K562 (cell line): ENCODE measurements at regions of chr1 and their contacts with region 1.

Region 1: GRCh38 chr1:36475910-36476604 is 6.7 kb downstream of the CSF3R start:
- DNase-seq: no peak
- ATAC-seq: no peak
- H3K4me3 ChIP-seq: no peak overlapping the region
- H3K27ac ChIP-seq: no peak overlapping the region
- H3K4me1 ChIP-seq: peaks cover 12 to 25% of the 10 kb centered on the region in 2 experiments
- H3K27me3 ChIP-seq: no peaks in the 10 kb centered on the region
- CTCF ChIP-seq: peak in 1 of 3 experiments; percentile 31; a peak in 2 of 6 replicates
- EP300 ChIP-seq: no peak
- POLR2A ChIP-seq: no peak
- RAD21 ChIP-seq: no peak

Region 2: DNA sequence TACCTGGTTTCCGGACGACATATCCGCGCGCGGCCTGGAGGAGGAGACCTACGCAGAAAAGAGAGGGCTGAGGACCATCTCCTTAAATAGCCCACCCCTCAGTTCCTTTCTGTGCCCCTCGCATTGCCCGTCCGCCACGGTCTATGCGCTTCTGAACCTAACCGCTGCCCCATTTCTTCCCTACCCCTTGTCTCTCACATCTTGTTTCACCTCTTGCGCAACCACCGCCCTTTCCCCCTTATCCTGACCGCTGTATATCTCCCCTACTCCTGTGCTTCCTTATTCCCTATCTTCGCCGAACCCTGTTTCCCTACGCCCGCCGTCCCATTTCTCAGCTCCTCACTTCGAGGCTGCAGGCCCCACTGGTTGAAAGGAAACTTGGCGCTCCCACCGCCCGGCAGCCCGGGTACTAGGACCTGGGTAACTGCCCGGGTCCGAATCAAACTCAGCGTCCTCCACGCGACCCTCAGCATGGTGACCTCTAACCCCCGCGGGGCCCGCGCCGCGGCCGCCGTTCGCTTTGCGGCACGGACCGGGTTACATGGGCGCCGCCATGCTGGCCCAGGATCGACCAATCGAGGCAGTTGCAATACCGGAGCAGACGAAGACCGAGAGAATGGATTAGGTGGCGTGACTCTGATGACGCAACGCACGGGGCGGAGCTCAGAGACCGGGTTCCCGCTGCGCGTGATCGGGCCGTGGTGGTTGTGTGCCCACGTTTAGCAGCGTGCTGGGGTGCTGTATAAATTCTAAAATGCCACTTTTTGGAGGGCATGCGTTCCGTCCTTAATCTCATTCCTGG is 12.1 kb before region 1 on chr1 and contains the start of gene MRPS15:
- CTCF ChIA-PET with region 1: no interaction called
- POLR2A ChIA-PET with region 1: interaction called, 10 read pairs
- in situ Hi-C with region 1: no loop called
- intact Hi-C with region 1: no loop called
- DNase-seq: peak; percentile 96 to 99 (median 97)
- ATAC-seq: peak; percentile 91
- H3K4me3 ChIP-seq: peak within 1 kb of the TSS; percentile 93
- H3K27ac ChIP-seq: peak within 1 kb of the TSS; percentile 97
- H3K4me1 ChIP-seq: peaks cover 16 to 24% of the 10 kb centered on the region in 2 experiments
- H3K27me3 ChIP-seq: no peaks in the 10 kb centered on the region
- CTCF ChIP-seq: no peak
- EP300 ChIP-seq: peak; percentile 81
- POLR2A ChIP-seq: peak; percentile 96
- RAD21 ChIP-seq: peak in 1 of 2 experiments; percentile 14; a peak in 2 of 4 replicates
- polyA plus RNA-seq, gene MRPS15: 62.9 to 107 TPM

Region 3: GRCh38 chr1:36565576-36566501 is 89.8 kb after region 1 on chr1:
- CTCF ChIA-PET with region 1: no interaction called
- POLR2A ChIA-PET with region 1: no interaction called
- in situ Hi-C with region 1: no loop called
- intact Hi-C with region 1: no loop called
- DNase-seq: no peak
- ATAC-seq: no peak
- H3K4me3 ChIP-seq: no peak overlapping the region
- H3K27ac ChIP-seq: no peak overlapping the region
- H3K4me1 ChIP-seq: no peaks in the 10 kb centered on the region; a peak in 1 of 5 replicates
- H3K27me3 ChIP-seq: peaks cover 4 to 69% of the 10 kb centered on the region in 2 experiments; a peak in 4 of 5 replicates
- CTCF ChIP-seq: no peak
- EP300 ChIP-seq: no peak
- POLR2A ChIP-seq: no peak
- RAD21 ChIP-seq: no peak